Mammary epithelial cell (primary cell): ENCODE measurements at regions of chrX and their contacts with region 1.

Region 1: GRCh38 chrX:50813827-50814742 is at the start of gene SHROOM4:
- DNase-seq: peak; percentile 41
- H3K4me3 ChIP-seq: peak within 1 kb of the TSS; percentile 19 to 54 (median 39)
- H3K27ac ChIP-seq: peak within 1 kb of the TSS; percentile 13
- H3K4me1 ChIP-seq: peaks cover 7% of the 10 kb centered on the region
- H3K27me3 ChIP-seq: no peaks in the 10 kb centered on the region
- CTCF ChIP-seq: no peak
- total RNA-seq, gene SHROOM4: 2.8 to 7.0 TPM

Region 2: GRCh38 chrX:50799531-50799961 is 14.5 kb before region 1 on chrX:
- CTCF ChIA-PET with region 1: no interaction called
- dilution Hi-C with region 1: no loop called
- in situ Hi-C with region 1: no loop called
- intact Hi-C with region 1: loop called (anchors 1 kb)
- DNase-seq: peak; percentile 81
- H3K4me3 ChIP-seq: peak overlapping the region in 1 of 3 experiments; percentile 18
- H3K27ac ChIP-seq: peak overlapping the region; percentile 58
- H3K4me1 ChIP-seq: peaks cover 16% of the 10 kb centered on the region
- H3K27me3 ChIP-seq: no peaks in the 10 kb centered on the region
- CTCF ChIP-seq: no peak

Region 3: GRCh38 chrX:50827991-50828390 is 13.9 kb after region 1 on chrX:
- CTCF ChIA-PET with region 1: no interaction called
- dilution Hi-C with region 1: no loop called
- in situ Hi-C with region 1: no loop called
- intact Hi-C with region 1: loop called (anchors 1 kb)
- DNase-seq: peak; percentile 85
- H3K4me3 ChIP-seq: no peak overlapping the region
- H3K27ac ChIP-seq: peak overlapping the region; percentile 47
- H3K4me1 ChIP-seq: peaks cover 11% of the 10 kb centered on the region
- H3K27me3 ChIP-seq: no peaks in the 10 kb centered on the region
- CTCF ChIP-seq: no peak

Region 4: GRCh38 chrX:50905334-50905733 is 91.2 kb after region 1 on chrX:
- CTCF ChIA-PET with region 1: no interaction called
- dilution Hi-C with region 1: no loop called
- in situ Hi-C with region 1: no loop called
- intact Hi-C with region 1: loop called (anchors 2 kb)
- DNase-seq: peak; percentile 11
- H3K4me3 ChIP-seq: no peak overlapping the region
- H3K27ac ChIP-seq: no peak overlapping the region
- H3K4me1 ChIP-seq: no peaks in the 10 kb centered on the region
- H3K27me3 ChIP-seq: peaks cover 2% of the 10 kb centered on the region
- CTCF ChIP-seq: peak; percentile 43 to 58